ENCODE measurements at regions of chr1 and their contacts with region 1.

Region 1: GRCh38 chr1:3796215-3797061 is at the start of gene LRRC47:
- DNase-seq: peak; percentile 95

Region 2: GRCh38 chr1:3772027-3772714 is 24.3 kb before region 1 on chr1:
- CTCF ChIA-PET with region 1: interaction called, 3 read pairs
- POLR2A ChIA-PET with region 1: interaction called, 11 read pairs
- DNase-seq: peak; percentile 99